Spleen (tissue), 13 donors: ENCODE measurements at regions of chr16 and their contacts with region 1.

Region 1: GRCh38 chr16:55849536-55849935 is 16.6 kb upstream of the CES1 start:
- DNase-seq: no peak
- H3K4me3 ChIP-seq: no peak overlapping the region
- H3K27ac ChIP-seq: no peak overlapping the region
- H3K4me1 ChIP-seq: no peaks in the 10 kb centered on the region
- H3K27me3 ChIP-seq: peaks cover 0 to 51% (median 0%) of the 10 kb centered on the region in 7 donors
- CTCF ChIP-seq: no peak
- POLR2A ChIP-seq: no peak

Region 2: GRCh38 chr16:55701442-55702319 is 147.9 kb before region 1 on chr16:
- intact Hi-C with region 1: loop called (anchors 5 kb)
- DNase-seq: peak; percentile 83
- H3K4me3 ChIP-seq: no peak overlapping the region
- H3K27ac ChIP-seq: no peak overlapping the region
- H3K4me1 ChIP-seq: no peaks in the 10 kb centered on the region
- H3K27me3 ChIP-seq: peaks cover 0 to 17% (median 0%) of the 10 kb centered on the region in 7 donors
- CTCF ChIP-seq: peak in 9 of 11 experiments; percentile 16 to 62 (median 34)
- POLR2A ChIP-seq: no peak